IMR-90 (cell line): ENCODE measurements at regions of chr15 and their contacts with region 1.

Region 1: DNA sequence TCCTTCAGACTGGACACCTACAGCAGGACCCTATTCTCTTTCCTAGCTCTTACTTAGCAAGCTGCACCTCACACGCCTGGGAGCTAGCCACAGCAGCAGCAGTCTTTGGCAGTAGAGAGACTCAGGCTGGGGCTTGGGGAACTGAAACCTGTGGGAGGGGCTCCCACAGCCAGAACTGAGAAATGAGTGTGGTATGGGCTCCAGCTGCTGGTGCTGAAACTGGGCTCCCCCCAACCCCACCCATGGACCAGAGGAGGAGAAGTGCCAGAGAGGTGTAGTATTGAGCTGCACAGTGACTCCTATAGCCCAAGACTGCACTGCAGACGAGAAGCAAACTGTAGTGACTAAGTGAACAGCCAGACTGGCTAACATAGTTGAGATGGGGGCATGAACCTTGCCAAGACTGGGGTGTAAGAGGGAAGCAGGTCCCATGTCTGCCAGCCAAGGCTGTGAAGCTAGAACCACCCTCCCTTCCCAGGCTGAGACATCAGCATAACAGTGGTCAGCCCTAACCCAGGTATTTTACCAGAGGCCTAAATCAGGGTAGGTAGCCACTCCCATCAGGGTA is 62.5 kb downstream of the MYO5A start:
- DNase-seq: no peak
- ATAC-seq: no peak
- H3K4me3 ChIP-seq: no peak overlapping the region
- H3K27ac ChIP-seq: no peak overlapping the region
- H3K4me1 ChIP-seq: peaks cover 7% of the 10 kb centered on the region
- H3K27me3 ChIP-seq: no peaks in the 10 kb centered on the region
- CTCF ChIP-seq: no peak
- POLR2A ChIP-seq: no peak
- RAD21 ChIP-seq: no peak

Region 2: DNA sequence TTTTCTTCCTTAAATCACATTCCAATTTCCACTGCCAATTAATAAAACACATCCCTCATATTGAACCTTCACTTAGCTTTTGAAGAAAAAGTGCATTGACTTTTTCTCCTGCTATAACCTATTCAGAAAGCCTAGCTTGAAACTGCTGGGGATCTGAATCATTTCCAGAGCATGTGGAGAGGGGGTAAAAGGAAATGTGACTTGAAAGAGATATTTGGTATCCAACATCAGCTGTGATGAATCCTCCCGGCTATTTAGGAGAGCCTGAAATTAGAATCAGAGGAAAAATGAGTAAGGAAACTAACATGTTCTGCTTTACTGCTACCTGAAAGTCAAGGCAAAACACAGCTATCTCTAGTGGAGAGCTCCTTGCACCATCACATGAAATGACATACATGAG is 272.4 kb before region 1 on chr15:
- CTCF ChIA-PET with region 1: no interaction called
- POLR2A ChIA-PET with region 1: no interaction called
- dilution Hi-C with region 1: no loop called
- in situ Hi-C with region 1: no loop called
- intact Hi-C with region 1: no loop called
- DNase-seq: peak; percentile 23
- ATAC-seq: no peak
- H3K4me3 ChIP-seq: no peak overlapping the region
- H3K27ac ChIP-seq: no peak overlapping the region
- H3K4me1 ChIP-seq: peaks cover 3% of the 10 kb centered on the region; the same call in 1 of the 2 replicates
- H3K27me3 ChIP-seq: peaks cover 13% of the 10 kb centered on the region
- CTCF ChIP-seq: no peak
- POLR2A ChIP-seq: no peak
- RAD21 ChIP-seq: no peak

Region 3: GRCh38 chr15:52417521-52417920 is 48.7 kb before region 1 on chr15:
- CTCF ChIA-PET with region 1: no interaction called
- POLR2A ChIA-PET with region 1: interaction called, 21 read pairs
- dilution Hi-C with region 1: no loop called
- in situ Hi-C with region 1: no loop called
- intact Hi-C with region 1: no loop called
- DNase-seq: peak; percentile 34
- ATAC-seq: no peak
- H3K4me3 ChIP-seq: no peak overlapping the region
- H3K27ac ChIP-seq: no peak overlapping the region
- H3K4me1 ChIP-seq: no peaks in the 10 kb centered on the region
- H3K27me3 ChIP-seq: no peaks in the 10 kb centered on the region
- CTCF ChIP-seq: no peak
- POLR2A ChIP-seq: no peak
- RAD21 ChIP-seq: no peak

Region 4: GRCh38 chr15:52427804-52428203 is 38.4 kb before region 1 on chr15:
- CTCF ChIA-PET with region 1: no interaction called
- POLR2A ChIA-PET with region 1: interaction called, 3 read pairs
- dilution Hi-C with region 1: no loop called
- in situ Hi-C with region 1: no loop called
- intact Hi-C with region 1: loop called (anchors 5 kb)
- DNase-seq: peak; percentile 86
- ATAC-seq: peak; percentile 94
- H3K4me3 ChIP-seq: no peak overlapping the region
- H3K27ac ChIP-seq: no peak overlapping the region
- H3K4me1 ChIP-seq: no peaks in the 10 kb centered on the region
- H3K27me3 ChIP-seq: no peaks in the 10 kb centered on the region
- CTCF ChIP-seq: no peak
- POLR2A ChIP-seq: no peak
- RAD21 ChIP-seq: no peak

Region 5: GRCh38 chr15:52518490-52519371 is 52.5 kb after region 1 on chr15:
- CTCF ChIA-PET with region 1: no interaction called
- POLR2A ChIA-PET with region 1: no interaction called
- dilution Hi-C with region 1: no loop called
- in situ Hi-C with region 1: no loop called
- intact Hi-C with region 1: loop called (anchors 10 kb)
- DNase-seq: peak; percentile 63
- ATAC-seq: peak; percentile 30; the same call in 1 of the 2 replicates
- H3K4me3 ChIP-seq: no peak overlapping the region
- H3K27ac ChIP-seq: no peak overlapping the region
- H3K4me1 ChIP-seq: peaks cover 9% of the 10 kb centered on the region
- H3K27me3 ChIP-seq: no peaks in the 10 kb centered on the region
- CTCF ChIP-seq: no peak
- POLR2A ChIP-seq: no peak
- RAD21 ChIP-seq: no peak

Region 6: GRCh38 chr15:52540374-52541012 is 74.3 kb after region 1 on chr15:
- CTCF ChIA-PET with region 1: no interaction called
- POLR2A ChIA-PET with region 1: no interaction called
- dilution Hi-C with region 1: no loop called
- in situ Hi-C with region 1: no loop called
- intact Hi-C with region 1: no loop called
- DNase-seq: no peak
- ATAC-seq: no peak
- H3K4me3 ChIP-seq: no peak overlapping the region
- H3K27ac ChIP-seq: no peak overlapping the region
- H3K4me1 ChIP-seq: no peaks in the 10 kb centered on the region
- H3K27me3 ChIP-seq: no peaks in the 10 kb centered on the region
- CTCF ChIP-seq: no peak
- POLR2A ChIP-seq: no peak
- RAD21 ChIP-seq: no peak